Heart left ventricle (tissue), 16 donors: ENCODE measurements at regions of chr18 and their contacts with region 1.

Region 1: DNA sequence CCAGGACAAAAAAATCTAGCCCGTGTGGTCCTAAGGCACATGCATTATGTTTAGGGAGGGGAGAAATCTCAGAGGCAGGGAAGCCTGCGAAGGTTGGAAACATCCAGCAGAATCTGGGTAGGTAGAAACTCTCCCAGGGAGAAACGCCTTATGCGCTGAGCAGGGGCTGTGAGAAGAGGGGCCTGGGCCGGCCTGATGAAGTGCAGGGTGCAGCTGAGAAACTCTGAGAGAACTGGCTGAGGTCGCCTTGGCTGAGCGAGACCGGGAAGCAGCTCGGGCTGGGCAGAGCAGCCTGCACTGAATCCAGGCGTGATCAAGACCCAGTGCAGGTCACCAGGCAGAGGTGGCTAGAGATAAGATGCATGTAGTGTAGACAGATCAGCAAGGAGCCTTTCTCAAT is 15.1 kb downstream of the CHMP1B start:
- DNase-seq: no peak
- ATAC-seq: no peak
- H3K4me3 ChIP-seq: no peak overlapping the region
- H3K27ac ChIP-seq: no peak overlapping the region
- H3K4me1 ChIP-seq: no peaks in the 10 kb centered on the region
- H3K27me3 ChIP-seq: peaks cover 0 to 3% (median 0%) of the 10 kb centered on the region in 9 donors
- CTCF ChIP-seq: no peak
- POLR2A ChIP-seq: no peak

Region 2: DNA sequence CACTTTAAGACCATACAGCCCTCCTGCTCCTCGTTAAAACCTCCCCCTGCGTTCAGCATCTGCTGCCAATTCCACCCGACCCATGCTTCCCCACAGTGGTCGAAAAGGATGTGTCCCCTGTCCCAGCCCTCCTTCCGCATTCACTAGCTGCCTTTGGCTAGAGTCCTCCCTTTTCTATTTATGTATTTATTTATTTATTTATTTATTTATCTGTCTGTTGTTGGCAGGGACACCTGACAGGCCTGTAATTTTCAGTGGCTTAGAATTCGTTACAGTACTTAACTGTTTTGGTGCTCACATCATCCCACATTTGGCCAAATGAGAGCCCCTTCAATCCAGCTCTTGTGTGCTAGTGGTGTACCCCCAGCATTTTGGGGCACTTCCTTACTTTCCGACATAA is 126.4 kb before region 1 on chr18:
- intact Hi-C with region 1: loop called in 1 of 10 experiments (anchors 2 kb)
- DNase-seq: no peak
- ATAC-seq: peak in 1 of 4 donors; percentile 50
- H3K4me3 ChIP-seq: no peak overlapping the region
- H3K27ac ChIP-seq: no peak overlapping the region
- H3K4me1 ChIP-seq: peaks cover 0 to 3% (median 0%) of the 10 kb centered on the region in 12 donors
- H3K27me3 ChIP-seq: peaks cover 0 to 11% (median 2%) of the 10 kb centered on the region in 9 donors
- CTCF ChIP-seq: no peak
- POLR2A ChIP-seq: no peak